ENCODE measurements at regions of chr1 and their contacts with region 1.

Region 1: GRCh38 chr1:179867807-179868330 is 9.7 kb downstream of the TOR1AIP2 start:
- DNase-seq: peak; percentile 58
- CTCF ChIP-seq: peak; percentile 63

Region 2: DNA sequence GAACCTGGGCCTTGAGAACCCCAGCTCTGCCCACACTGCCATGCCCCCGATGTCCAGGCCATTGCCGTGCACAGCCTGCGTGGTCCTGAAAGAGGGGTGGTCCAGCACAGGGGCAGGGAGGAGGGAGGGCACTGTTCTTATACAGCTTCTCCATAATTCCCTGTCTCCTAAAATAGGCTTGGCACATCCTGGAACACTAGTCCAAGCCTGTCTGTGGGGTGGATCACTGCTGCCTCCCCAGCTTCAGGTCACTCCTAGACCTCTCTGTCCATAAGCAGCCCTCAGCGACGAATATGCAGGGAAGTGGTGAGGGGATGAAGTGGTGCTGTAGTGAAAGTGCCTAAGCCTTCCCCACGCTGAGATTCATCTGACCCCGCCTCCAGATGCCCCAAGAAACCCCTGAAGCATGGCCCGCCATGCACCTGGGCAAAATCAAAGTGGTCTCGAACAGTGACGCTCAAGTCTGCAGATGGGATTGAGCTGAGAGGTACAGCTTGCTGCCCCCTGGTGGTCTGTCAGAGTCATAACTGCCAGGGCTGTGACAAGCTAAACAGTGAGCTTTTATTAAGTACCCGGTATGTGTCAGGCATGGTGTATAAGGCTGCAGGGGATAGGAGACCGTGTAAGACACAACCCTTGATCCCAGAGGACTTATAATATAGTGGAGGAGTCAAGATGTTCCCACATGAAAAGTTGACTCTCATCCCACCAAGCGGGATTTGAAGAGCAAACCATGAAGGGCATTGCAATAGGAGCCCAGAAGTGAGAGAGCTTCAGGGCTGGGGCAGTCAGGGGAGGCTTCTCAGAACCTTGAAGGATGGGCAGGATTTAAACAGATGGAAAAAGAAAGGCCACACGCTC is 58.1 kb before region 1 on chr1:
- in situ Hi-C with region 1: no loop called
- DNase-seq: peak; percentile 80
- CTCF ChIP-seq: peak; percentile 84

Region 3: DNA sequence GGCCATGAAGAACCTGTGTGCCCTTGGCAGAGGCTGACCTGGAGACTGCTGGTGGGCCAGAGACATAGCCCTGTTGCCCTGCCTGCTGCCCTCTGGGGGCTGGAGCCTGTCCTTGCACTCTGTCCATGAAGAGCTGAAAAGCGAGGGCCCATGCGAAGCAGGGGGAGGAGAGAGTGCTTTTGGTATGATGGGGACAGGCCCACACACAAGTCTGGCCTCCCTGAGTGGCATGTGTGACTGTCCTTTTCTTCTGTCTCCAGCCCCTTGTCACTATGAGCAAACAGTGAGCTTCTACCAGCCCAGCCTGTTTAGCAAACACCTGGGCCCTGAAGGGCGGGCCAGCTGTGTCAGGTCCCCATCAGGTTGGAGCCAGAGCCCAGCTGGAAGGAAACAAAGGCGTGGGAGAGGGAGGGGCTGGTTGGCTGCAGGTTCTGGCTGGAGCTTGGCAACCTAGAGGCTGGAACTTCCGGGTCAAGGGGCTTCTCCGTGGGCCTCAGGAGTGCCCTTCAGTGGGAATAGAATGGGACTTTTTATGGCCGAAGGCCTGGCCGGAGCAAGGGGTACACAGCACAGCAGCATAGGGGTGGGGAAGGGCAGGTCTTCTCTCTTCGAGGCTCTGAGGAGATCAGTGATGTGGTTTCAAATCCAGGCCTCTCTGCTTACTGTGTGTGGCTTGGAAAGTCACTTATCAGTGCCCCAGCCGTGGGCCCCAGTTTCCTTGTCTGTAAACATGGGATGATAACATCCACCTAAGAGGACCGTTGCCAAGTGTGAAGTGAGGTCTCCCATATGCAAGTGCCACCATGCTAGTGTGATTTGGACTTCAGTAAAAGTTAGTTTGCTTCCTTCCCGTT is 301.1 kb after region 1 on chr1:
- in situ Hi-C with region 1: loop called (anchors 10 kb)
- DNase-seq: peak; percentile 77
- CTCF ChIP-seq: peak; percentile 45

Measured in GM13976 (cell line).